ENCODE measurements at regions of chr6 and their contacts with region 1.

Region 1: DNA sequence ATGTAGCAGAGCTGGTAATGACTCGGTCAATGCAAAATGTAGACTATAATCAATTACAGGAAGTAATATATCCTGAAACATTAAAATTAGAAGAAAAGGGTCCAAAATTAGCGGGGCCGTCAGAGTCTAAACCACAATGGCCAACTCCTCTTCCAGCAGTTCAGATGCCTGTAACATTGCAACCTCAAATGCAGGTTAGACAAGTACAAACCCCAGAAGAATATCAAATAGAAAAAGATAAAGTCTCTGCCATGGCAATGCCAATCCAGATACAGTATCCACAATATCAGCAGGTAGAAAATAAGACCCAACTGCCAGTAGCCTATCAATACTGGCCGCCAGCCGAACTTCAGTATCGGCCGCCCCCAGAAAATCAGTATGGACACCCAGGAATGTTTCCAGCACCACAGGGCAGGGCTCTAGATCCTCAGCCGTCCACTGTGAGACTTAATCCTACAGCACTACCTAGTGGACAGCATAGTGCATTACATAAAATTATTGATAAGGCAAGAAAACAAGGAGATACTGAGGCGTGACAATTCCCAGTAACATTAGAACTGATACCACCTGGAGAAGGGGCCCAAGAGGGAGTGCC is 158.4 kb downstream of the GPX5 start:
- DNase-seq: peak; percentile 49 to 65
- H3K4me3 ChIP-seq: peak overlapping the region; percentile 16; the same call in 1 of the 2 replicates
- H3K4me3 Mint-ChIP-seq: peak overlapping the region; percentile 73
- H3K27ac Mint-ChIP-seq: no peak overlapping the region
- H3K4me1 ChIP-seq: peaks cover 18% of the 10 kb centered on the region
- H3K4me1 Mint-ChIP-seq: peaks cover 44% of the 10 kb centered on the region
- H3K27me3 ChIP-seq: no peaks in the 10 kb centered on the region
- H3K27me3 Mint-ChIP-seq: no peaks in the 10 kb centered on the region
- CTCF ChIP-seq: peak; percentile 63 to 72

Region 2: GRCh38 chr6:28322661-28323060 is 361.4 kb before region 1 on chr6:
- CTCF ChIA-PET with region 1: no interaction called
- POLR2A ChIA-PET with region 1: no interaction called
- intact Hi-C with region 1: no loop called
- DNase-seq: no peak
- H3K4me3 ChIP-seq: no peak overlapping the region
- H3K4me3 Mint-ChIP-seq: no peak overlapping the region
- H3K27ac Mint-ChIP-seq: no peak overlapping the region
- H3K4me1 ChIP-seq: no peaks in the 10 kb centered on the region
- H3K4me1 Mint-ChIP-seq: peaks cover 11% of the 10 kb centered on the region
- H3K27me3 ChIP-seq: no peaks in the 10 kb centered on the region
- H3K27me3 Mint-ChIP-seq: no peaks in the 10 kb centered on the region
- CTCF ChIP-seq: no peak

Region 3: DNA sequence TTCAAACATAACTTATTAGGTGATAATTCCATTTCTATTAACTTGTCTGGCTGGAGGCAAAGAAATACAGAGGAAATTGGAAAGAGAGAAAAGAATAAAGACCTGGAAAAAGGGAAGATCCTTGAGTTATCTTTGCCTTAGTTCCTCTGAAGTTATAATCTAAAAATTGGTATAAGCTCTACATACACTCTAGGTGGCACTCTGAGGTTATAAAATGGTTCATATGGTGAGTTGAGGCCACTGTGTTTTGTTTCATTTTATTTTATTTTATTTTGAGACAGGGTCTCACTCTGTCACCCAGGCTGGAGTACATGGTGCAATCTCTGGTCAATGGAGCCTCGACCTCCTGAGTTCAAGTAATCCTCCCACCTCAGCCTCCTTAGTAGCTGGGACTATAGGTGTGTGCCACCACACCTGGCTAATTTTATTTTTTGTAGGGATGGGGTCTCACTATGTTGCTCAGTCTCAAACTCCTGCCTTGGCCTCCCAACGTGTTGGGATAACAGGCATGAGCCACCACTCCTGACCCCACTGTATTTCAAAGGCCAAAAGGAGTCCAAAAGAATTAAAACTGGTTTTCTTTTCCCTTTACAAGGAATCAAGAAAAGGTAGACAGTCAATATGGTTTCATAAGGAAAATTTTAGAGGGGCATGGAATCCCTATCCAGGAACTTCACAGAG is 187.8 kb before region 1 on chr6:
- CTCF ChIA-PET with region 1: no interaction called
- POLR2A ChIA-PET with region 1: no interaction called
- intact Hi-C with region 1: loop called (anchors 1 kb)
- DNase-seq: no peak
- H3K4me3 ChIP-seq: no peak overlapping the region
- H3K4me3 Mint-ChIP-seq: no peak overlapping the region
- H3K27ac Mint-ChIP-seq: no peak overlapping the region
- H3K4me1 ChIP-seq: no peaks in the 10 kb centered on the region
- H3K4me1 Mint-ChIP-seq: peaks cover 7% of the 10 kb centered on the region
- H3K27me3 ChIP-seq: no peaks in the 10 kb centered on the region
- H3K27me3 Mint-ChIP-seq: no peaks in the 10 kb centered on the region
- CTCF ChIP-seq: peak; percentile 24 to 29

Region 4: DNA sequence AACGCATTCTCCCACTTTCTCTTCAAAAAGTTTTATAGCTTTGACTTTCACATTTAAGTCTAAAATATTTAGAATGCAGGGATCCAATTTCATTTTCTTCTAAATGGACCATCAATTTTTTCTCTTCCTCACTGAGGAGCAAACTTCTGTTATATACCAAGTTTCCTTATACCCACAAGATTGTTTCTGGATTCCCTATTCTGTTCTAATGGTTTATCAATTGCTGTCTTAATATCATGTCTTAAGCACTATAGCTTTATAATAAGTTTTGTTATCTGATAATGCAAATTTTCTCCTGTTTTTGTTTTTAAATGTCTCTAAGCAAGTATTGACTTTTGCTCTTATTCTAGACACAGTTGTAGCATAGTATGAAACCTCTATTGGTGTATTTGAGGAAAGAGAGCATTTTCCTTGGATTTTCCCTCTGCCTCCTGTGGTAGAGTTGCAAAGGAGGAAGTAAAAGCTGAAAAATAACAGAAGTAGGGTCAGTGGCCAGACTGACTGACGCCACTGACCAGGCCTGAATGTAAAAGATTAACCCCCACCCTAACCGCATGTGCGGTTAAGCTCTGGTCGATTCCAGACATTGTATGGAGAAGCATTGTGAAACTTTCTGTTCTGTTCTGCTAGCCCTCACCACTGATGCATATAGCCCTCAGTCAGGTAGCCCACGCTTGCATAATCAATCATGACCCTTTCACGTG is 118.1 kb before region 1 on chr6:
- CTCF ChIA-PET with region 1: no interaction called
- POLR2A ChIA-PET with region 1: no interaction called
- intact Hi-C with region 1: no loop called
- DNase-seq: no peak
- H3K4me3 ChIP-seq: no peak overlapping the region
- H3K4me3 Mint-ChIP-seq: no peak overlapping the region
- H3K27ac Mint-ChIP-seq: no peak overlapping the region
- H3K4me1 ChIP-seq: no peaks in the 10 kb centered on the region
- H3K4me1 Mint-ChIP-seq: no peaks in the 10 kb centered on the region
- H3K27me3 ChIP-seq: no peaks in the 10 kb centered on the region
- H3K27me3 Mint-ChIP-seq: peaks cover 11% of the 10 kb centered on the region
- CTCF ChIP-seq: no peak

Region 5: GRCh38 chr6:28606424-28607400 is 77.3 kb before region 1 on chr6:
- CTCF ChIA-PET with region 1: no interaction called
- POLR2A ChIA-PET with region 1: no interaction called
- intact Hi-C with region 1: loop called (anchors 5 kb)
- DNase-seq: peak; percentile 75 to 77
- H3K4me3 ChIP-seq: peak overlapping the region; percentile 36
- H3K4me3 Mint-ChIP-seq: peak overlapping the region; percentile 80
- H3K27ac Mint-ChIP-seq: peak overlapping the region; percentile 69
- H3K4me1 ChIP-seq: peaks cover 6% of the 10 kb centered on the region
- H3K4me1 Mint-ChIP-seq: peaks cover 7% of the 10 kb centered on the region
- H3K27me3 ChIP-seq: no peaks in the 10 kb centered on the region
- H3K27me3 Mint-ChIP-seq: no peaks in the 10 kb centered on the region
- CTCF ChIP-seq: peak; percentile 55 to 56

Region 6: DNA sequence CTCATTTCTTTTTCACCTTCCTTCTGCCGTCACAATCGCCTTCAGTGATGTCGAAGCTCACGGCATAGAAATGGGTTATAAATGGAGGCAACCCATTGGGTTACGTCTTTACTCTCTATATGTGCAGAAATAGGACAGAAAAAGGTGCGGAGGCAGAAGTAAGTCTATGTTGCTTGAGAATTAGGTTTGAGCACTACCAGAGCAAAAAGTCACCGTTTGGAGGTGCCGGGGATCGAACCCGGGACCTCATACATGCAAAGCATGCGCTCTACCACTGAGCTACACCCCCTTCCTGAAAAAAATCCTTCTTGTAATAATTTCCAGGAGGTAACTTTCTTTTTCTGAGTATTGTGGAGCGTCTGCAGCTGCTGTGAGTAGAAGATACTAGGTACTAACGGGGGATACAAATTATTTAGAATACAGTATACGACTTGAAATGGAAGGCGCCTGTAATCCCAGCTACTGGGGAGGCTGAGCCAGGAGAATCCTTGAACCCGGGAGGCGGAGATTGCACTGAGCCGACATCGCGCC is 105.6 kb after region 1 on chr6:
- CTCF ChIA-PET with region 1: no interaction called
- POLR2A ChIA-PET with region 1: no interaction called
- intact Hi-C with region 1: loop called (anchors 2 kb)
- DNase-seq: peak; percentile 45 to 71
- H3K4me3 ChIP-seq: peak overlapping the region; percentile 34
- H3K4me3 Mint-ChIP-seq: peak overlapping the region; percentile 82
- H3K27ac Mint-ChIP-seq: peak overlapping the region; percentile 92
- H3K4me1 ChIP-seq: peaks cover 4% of the 10 kb centered on the region; the same call in 1 of the 2 replicates
- H3K4me1 Mint-ChIP-seq: peaks cover 27% of the 10 kb centered on the region
- H3K27me3 ChIP-seq: no peaks in the 10 kb centered on the region
- H3K27me3 Mint-ChIP-seq: peaks cover 3% of the 10 kb centered on the region
- CTCF ChIP-seq: no peak

Region 7: GRCh38 chr6:28838634-28839442 is 154.8 kb after region 1 on chr6:
- CTCF ChIA-PET with region 1: interaction called, 3 read pairs
- POLR2A ChIA-PET with region 1: no interaction called
- intact Hi-C with region 1: loop called (anchors 1 kb)
- DNase-seq: peak; percentile 85 to 90
- H3K4me3 ChIP-seq: peak overlapping the region; percentile 66
- H3K4me3 Mint-ChIP-seq: peak overlapping the region; percentile 96
- H3K27ac Mint-ChIP-seq: peak overlapping the region; percentile 94
- H3K4me1 ChIP-seq: no peaks in the 10 kb centered on the region; the same call in 1 of the 2 replicates
- H3K4me1 Mint-ChIP-seq: peaks cover 6% of the 10 kb centered on the region
- H3K27me3 ChIP-seq: no peaks in the 10 kb centered on the region
- H3K27me3 Mint-ChIP-seq: peaks cover 3% of the 10 kb centered on the region
- CTCF ChIP-seq: peak; percentile 68 to 75

Region 8: DNA sequence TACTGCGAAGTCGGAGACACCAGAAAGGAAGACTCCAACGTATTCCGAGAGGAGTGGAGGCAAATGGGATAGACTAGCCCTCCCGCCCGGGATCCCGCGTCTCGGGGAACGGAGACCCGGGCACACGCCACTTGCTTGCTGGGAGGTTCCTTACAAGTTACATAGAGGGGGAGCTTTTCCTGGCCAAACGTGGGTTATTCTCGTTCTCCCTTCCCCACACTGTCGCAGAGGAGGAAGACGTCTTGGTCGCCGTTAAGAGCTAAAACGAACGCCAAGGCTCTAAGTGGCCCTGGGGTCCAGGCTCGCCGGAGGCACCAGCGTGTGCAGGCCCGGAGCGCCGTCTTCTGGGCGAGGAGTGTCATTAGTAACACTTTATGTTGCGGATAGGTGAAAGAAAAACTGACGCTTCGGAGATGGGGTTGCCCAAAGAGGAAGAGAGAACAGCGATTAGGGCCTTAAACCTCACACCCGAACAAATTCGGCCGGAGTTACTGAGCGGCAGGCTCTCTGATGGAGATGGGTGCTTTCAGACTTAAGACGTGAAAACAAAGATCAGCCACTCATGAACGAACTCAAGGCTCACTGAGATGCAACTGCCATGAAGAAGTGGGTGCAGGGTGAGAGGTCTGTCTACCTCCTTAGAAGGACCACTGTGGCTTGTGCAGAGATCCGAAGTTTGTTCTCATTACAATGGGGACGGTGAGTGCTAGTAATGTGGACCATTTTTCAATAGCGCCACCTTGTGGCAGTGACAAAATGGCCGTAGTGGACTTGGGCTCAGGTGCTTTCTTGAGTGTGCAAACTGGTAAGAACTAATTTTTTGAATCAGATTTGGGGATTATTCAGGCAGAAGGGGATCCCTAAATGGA is 332.8 kb after region 1 on chr6:
- CTCF ChIA-PET with region 1: no interaction called
- POLR2A ChIA-PET with region 1: no interaction called
- intact Hi-C with region 1: loop called (anchors 1 kb)
- DNase-seq: peak; percentile 80 to 82
- H3K4me3 ChIP-seq: peak overlapping the region; percentile 53
- H3K4me3 Mint-ChIP-seq: peak overlapping the region; percentile 96
- H3K27ac Mint-ChIP-seq: peak overlapping the region; percentile 41
- H3K4me1 ChIP-seq: peaks cover 3% of the 10 kb centered on the region; the same call in 1 of the 2 replicates
- H3K4me1 Mint-ChIP-seq: peaks cover 6% of the 10 kb centered on the region
- H3K27me3 ChIP-seq: no peaks in the 10 kb centered on the region
- H3K27me3 Mint-ChIP-seq: peaks cover 5% of the 10 kb centered on the region
- CTCF ChIP-seq: peak; percentile 66 to 81